ENCODE measurements at regions of chr20 and their contacts with region 1.

Region 1: DNA sequence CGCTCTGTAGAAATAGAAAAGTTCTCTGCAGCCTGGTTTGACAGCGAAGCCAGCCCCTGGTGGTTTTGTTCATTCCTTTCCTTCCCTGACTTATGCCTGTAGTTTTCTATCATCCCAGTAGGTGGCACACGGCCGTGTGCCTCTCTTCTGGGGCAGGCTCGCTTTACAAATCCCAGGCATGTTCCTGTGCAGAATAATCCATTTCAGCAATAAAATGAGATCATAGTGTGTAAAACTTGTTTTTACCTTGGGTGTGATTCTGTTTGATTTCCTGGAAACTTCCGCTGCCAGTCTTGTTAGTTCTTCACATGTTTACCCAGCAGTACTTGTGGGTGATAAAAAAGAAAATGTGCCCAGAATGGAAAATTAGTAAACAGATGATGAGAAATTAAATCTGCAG is 7.4 kb upstream of the INSM1 start:
- DNase-seq: peak; percentile 54
- H3K4me3 Mint-ChIP-seq: no peak overlapping the region
- H3K27ac Mint-ChIP-seq: no peak overlapping the region
- H3K4me1 Mint-ChIP-seq: peaks cover 21% of the 10 kb centered on the region
- H3K27me3 Mint-ChIP-seq: peaks cover 53% of the 10 kb centered on the region

Region 2: GRCh38 chr20:19710336-19711120 is 649.9 kb before region 1 on chr20:
- CTCF ChIA-PET with region 1: no interaction called
- intact Hi-C with region 1: no loop called
- DNase-seq: no peak
- H3K4me3 Mint-ChIP-seq: no peak overlapping the region
- H3K27ac Mint-ChIP-seq: no peak overlapping the region
- H3K4me1 Mint-ChIP-seq: no peaks in the 10 kb centered on the region
- H3K27me3 Mint-ChIP-seq: peaks cover 2% of the 10 kb centered on the region

Region 3: GRCh38 chr20:20452254-20452676 is 91.8 kb after region 1 on chr20:
- CTCF ChIA-PET with region 1: no interaction called
- intact Hi-C with region 1: loop called (anchors 5 kb)
- DNase-seq: peak; percentile 83
- H3K4me3 Mint-ChIP-seq: peak overlapping the region; percentile 67
- H3K27ac Mint-ChIP-seq: peak overlapping the region; percentile 56
- H3K4me1 Mint-ChIP-seq: peaks cover 36% of the 10 kb centered on the region
- H3K27me3 Mint-ChIP-seq: no peaks in the 10 kb centered on the region

Region 4: GRCh38 chr20:20489054-20489453 is 128.6 kb after region 1 on chr20:
- CTCF ChIA-PET with region 1: interaction called, 3 read pairs
- intact Hi-C with region 1: loop called (anchors 2 kb)
- DNase-seq: no peak
- H3K4me3 Mint-ChIP-seq: peak overlapping the region; percentile 48
- H3K27ac Mint-ChIP-seq: peak overlapping the region; percentile 89
- H3K4me1 Mint-ChIP-seq: peaks cover 50% of the 10 kb centered on the region
- H3K27me3 Mint-ChIP-seq: no peaks in the 10 kb centered on the region

Region 5: DNA sequence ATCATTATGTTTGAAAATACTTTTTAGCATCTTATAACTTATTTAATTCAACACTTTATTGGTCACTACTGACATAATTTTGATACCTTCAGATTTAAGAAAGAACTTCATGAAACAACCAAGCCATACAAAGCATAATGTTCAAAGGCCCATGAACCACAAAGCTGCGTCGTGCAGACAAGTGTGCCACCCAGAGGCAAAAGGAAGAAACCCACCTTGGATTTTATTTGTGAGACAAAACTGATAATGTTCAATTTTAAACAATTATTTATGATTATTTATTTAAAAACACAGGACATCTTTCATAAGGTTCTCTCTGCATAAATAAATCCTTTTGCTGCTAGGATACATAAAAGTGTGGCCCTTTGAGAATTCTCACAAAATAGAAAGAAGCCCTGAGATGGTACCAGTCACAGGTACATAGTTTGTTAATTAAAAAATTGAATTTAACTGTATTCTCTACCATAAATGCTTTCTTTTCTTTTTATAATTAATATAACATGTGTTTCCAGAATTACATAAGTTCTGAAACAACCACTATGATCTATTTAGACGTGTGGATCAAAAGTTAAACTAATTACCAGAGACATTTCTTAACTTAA is 208.2 kb after region 1 on chr20:
- CTCF ChIA-PET with region 1: no interaction called
- intact Hi-C with region 1: loop called (anchors 1 kb)
- DNase-seq: peak; percentile 54
- H3K4me3 Mint-ChIP-seq: no peak overlapping the region
- H3K27ac Mint-ChIP-seq: no peak overlapping the region
- H3K4me1 Mint-ChIP-seq: no peaks in the 10 kb centered on the region
- H3K27me3 Mint-ChIP-seq: no peaks in the 10 kb centered on the region

Region 6: DNA sequence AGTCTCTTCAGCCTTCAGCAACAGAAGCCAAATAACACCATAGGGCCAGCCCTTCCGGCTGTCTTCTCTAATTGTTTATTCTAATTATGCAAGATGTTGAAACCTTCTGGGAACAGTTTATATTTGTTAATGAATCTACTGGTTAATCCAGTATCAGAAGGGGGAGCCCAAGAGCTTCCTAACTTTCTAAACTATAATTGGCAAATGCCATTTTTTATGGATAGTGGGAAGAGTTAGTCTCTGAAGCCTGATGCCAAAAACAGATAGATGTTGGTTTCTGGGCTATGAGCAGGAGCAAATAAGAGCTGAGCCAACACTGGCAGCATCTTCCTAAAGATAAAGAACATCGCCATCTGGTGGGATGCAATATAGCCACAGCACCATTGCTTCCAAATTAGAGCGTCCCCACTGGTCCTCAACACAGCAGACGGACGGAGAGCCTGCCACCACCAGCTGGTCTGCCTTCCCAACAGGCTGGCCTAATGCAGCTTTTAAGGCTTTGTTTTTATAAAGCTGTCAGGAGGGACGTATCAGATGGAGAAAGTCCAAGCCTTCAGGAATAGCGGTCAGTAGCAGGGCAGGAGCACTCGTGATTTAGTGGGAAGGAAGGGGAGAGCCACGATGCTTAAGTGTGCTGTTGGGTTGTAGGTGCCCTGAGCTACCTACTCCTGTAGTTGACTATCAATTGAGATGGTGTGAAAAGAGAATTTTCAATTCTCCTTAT is 233.1 kb after region 1 on chr20:
- CTCF ChIA-PET with region 1: interaction called, 3 read pairs
- intact Hi-C with region 1: loop called (anchors 1 kb)
- DNase-seq: peak; percentile 30
- H3K4me3 Mint-ChIP-seq: no peak overlapping the region
- H3K27ac Mint-ChIP-seq: no peak overlapping the region
- H3K4me1 Mint-ChIP-seq: no peaks in the 10 kb centered on the region
- H3K27me3 Mint-ChIP-seq: no peaks in the 10 kb centered on the region

Region 7: GRCh38 chr20:21099751-21100577 is 739.5 kb after region 1 on chr20:
- CTCF ChIA-PET with region 1: no interaction called
- intact Hi-C with region 1: loop called (anchors 5 kb)
- DNase-seq: peak; percentile 65
- H3K4me3 Mint-ChIP-seq: peak overlapping the region; percentile 78
- H3K27ac Mint-ChIP-seq: no peak overlapping the region
- H3K4me1 Mint-ChIP-seq: peaks cover 32% of the 10 kb centered on the region
- H3K27me3 Mint-ChIP-seq: peaks cover 75% of the 10 kb centered on the region